ENCODE measurements at regions of chr12 and their contacts with region 1.

Region 1: DNA sequence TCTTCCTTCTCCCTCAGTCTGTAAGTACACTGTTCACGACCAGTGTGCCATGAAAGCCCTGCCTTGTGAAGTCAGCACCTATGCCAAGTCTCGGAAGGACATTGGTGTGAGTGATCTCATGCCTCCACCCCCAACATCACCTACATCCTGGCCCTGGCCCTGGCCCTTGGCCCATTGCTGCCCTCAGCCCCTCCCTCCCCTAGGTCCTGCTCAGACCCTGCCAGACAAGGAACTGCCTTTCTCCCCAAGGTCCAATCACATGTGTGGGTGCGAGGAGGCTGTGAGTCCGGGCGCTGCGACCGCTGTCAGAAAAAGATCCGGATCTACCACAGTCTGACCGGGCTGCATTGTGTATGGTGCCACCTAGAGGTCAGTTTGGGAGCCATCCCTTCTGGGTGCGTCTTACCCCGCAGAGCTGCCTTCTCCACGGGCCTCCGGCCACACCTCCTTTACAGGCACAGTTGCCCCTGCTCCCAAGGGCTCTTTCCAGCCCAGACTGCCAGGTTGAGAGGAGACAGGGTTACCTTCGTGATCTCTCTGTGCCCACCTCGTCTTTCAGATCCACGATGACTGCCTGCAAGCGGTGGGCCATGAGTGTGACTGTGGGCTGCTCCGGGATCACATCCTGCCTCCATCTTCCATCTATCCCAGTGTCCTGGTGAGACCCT is 9.2 kb downstream of the DGKA start:
- DNase-seq: no peak
- H3K4me3 ChIP-seq: peak overlapping the region in 3 of 4 donors; percentile 13 to 47 (median 14)
- H3K27ac ChIP-seq: peak overlapping the region; percentile 70 to 100 (median 88)
- H3K4me1 ChIP-seq: peaks cover 7 to 64% (median 19%) of the 10 kb centered on the region in 3 donors
- H3K27me3 ChIP-seq: no peaks in the 10 kb centered on the region
- CTCF ChIP-seq: peak; percentile 85 to 92 (median 90)
- POLR2A ChIP-seq: peak in 1 of 4 donors; percentile 11

Region 2: GRCh38 chr12:55743116-55743921 is 196.9 kb before region 1 on chr12 and contains the start of gene GDF11:
- intact Hi-C with region 1: loop called (anchors 5 kb)
- DNase-seq: no peak
- H3K4me3 ChIP-seq: peak within 1 kb of the TSS; percentile 36 to 82 (median 62)
- H3K27ac ChIP-seq: peak within 1 kb of the TSS; percentile 18 to 89 (median 70)
- H3K4me1 ChIP-seq: peaks cover 16 to 44% (median 21%) of the 10 kb centered on the region in 3 donors
- H3K27me3 ChIP-seq: peaks cover 0 to 16% (median 0%) of the 10 kb centered on the region in 4 donors
- CTCF ChIP-seq: peak in 2 of 6 experiments; percentile 9 to 12
- POLR2A ChIP-seq: no peak
- total RNA-seq, gene GDF11: 0.19 to 1.9 (median 1.5) TPM